CD4-positive, alpha-beta T cell (primary cell): ENCODE measurements at regions of chr11 and their contacts with region 1.

Region 1: DNA sequence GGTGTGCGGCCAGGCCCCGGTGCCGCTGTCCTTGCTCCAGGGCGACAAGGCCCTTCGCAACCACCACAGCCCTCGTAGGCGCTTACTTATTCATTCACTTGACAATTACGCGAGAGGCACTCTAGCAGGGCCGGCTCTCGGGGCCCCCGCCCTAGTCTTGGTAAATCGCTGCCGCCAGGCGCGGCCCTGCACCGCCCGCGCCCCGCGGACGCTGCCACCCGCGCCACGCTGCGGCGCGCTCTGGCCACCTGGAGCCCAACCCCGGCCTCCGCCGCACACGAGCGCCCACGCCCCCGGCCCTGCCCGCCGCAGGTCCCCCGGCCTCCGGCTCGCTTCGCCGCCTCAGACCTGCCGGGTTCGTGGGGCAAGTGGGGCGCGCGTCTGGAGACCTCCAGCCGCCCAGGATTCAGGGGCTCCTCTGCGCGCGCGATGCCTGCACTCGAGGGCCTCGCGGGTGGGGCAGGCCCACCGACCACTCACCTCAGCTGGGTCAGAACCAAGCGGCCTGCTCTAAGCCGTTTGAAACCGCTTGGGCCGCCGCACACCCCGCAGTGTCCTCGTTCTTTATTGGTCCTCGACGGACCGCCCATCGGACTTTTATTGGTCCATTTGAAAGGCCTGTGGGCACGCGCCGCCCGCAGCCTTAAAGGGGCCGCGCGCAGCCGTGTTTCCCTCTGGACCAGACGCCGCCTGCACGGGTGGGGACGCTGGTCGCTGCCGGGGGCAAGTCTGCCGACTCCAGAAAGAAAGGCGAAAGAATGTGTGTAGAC is at the start of gene CKAP5:
- DNase-seq: peak; percentile 64 to 91 (median 79)
- ATAC-seq: peak; percentile 90
- H3K4me3 ChIP-seq: peak within 1 kb of the TSS; percentile 82
- H3K4me3 Mint-ChIP-seq: peak within 1 kb of the TSS; percentile 99
- H3K27ac ChIP-seq: peak within 1 kb of the TSS; percentile 2 to 29
- H3K27ac Mint-ChIP-seq: peak within 1 kb of the TSS; percentile 93
- H3K4me1 ChIP-seq: peaks cover 29% of the 10 kb centered on the region
- H3K4me1 Mint-ChIP-seq: peaks cover 37% of the 10 kb centered on the region
- H3K27me3 ChIP-seq: no peaks in the 10 kb centered on the region
- H3K27me3 Mint-ChIP-seq: no peaks in the 10 kb centered on the region
- CTCF ChIP-seq: no peak
- total RNA-seq, gene CKAP5: 23.2 to 26.9 TPM

Region 2: DNA sequence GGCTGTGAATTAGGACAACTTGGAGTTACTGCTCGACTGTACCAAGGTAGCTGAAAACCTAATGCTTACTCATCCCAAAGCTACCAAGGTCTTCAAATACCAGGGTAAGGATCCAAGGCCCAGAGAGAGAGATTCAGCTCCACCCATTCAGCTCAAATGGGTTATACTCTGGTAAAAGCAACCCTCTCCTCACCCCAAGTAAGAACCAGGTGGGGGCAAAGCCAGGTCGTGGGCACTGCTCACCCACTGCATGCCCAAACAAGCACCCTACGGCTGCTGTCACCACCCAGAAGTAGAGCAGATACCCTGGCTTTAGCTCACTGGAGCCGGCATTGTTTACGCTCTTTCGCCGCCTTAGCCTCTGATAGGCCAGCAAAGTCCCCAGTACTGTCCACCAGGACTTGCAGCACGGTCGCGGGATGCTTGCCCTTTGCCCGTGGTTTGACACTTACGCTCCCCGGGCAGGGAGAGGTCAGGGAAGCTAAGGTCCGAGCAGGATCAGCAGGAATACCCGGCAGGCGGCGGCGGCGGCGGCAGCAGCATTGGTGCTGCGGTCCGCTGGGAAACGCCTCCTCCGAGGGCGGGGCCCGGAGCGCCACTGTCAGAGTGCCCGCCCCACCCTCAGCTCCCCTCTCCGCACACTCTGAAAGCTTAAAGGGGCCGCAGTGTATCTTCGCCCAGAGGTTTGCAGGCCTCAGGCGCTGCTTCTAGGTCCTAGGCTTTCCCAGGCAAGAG is 19.4 kb before region 1 on chr11:
- CTCF ChIA-PET with region 1: interaction called, 4 read pairs
- POLR2A ChIA-PET with region 1: interaction called, 8 read pairs
- intact Hi-C with region 1: loop called (anchors 1 kb)
- DNase-seq: peak; percentile 47 to 81 (median 68)
- ATAC-seq: peak; percentile 100
- H3K4me3 ChIP-seq: peak overlapping the region; percentile 61
- H3K4me3 Mint-ChIP-seq: peak overlapping the region; percentile 83
- H3K27ac ChIP-seq: no peak overlapping the region
- H3K27ac Mint-ChIP-seq: peak overlapping the region; percentile 44
- H3K4me1 ChIP-seq: peaks cover 17% of the 10 kb centered on the region
- H3K4me1 Mint-ChIP-seq: peaks cover 38% of the 10 kb centered on the region
- H3K27me3 ChIP-seq: no peaks in the 10 kb centered on the region
- H3K27me3 Mint-ChIP-seq: no peaks in the 10 kb centered on the region
- CTCF ChIP-seq: no peak